H1 (cell line): ENCODE measurements at regions of chr7 and their contacts with region 1.

Region 1: DNA sequence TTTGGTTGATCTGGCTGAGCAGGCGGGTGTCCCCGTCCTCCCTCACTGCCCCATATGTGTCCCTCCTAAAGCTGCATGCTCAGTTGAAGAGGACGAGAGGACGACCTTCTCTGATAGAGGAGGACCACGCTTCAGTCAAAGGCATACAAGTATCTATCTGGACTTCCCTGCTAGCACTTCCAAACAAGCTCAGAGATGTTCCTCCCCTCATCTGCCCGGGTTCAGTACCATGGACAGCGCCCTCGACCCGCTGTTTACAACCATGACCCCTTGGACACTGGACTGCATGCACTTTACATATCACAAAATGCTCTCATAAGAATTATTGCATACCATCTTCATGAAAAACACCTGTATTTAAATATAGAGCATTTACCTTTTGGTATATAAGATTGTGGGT is 26.9 kb upstream of the TRIM56 start:
- DNase-seq: peak in 1 of 2 experiments; percentile 88
- H3K4me3 ChIP-seq: no peak overlapping the region
- H3K27ac ChIP-seq: no peak overlapping the region
- H3K4me1 ChIP-seq: no peaks in the 10 kb centered on the region
- H3K27me3 ChIP-seq: peaks cover 0 to 2% (median 0%) of the 10 kb centered on the region in 4 experiments; a peak in 1 of 7 replicates
- CTCF ChIP-seq: no peak
- EP300 ChIP-seq: no peak
- POLR2A ChIP-seq: no peak
- RAD21 ChIP-seq: 0 out of 4 replicates have a peak, but pooled peaks of 1 of the 2 experiments have one; percentile 3

Region 2: GRCh38 chr7:100896732-100897608 is 161.4 kb before region 1 on chr7:
- CTCF ChIA-PET with region 1: interaction called, 21 read pairs
- POLR2A ChIA-PET with region 1: no interaction called
- DNase-seq: peak in 1 of 2 experiments; percentile 78
- H3K4me3 ChIP-seq: peak overlapping the region; percentile 3 to 58 (median 15); a peak in 4 of 8 replicates
- H3K27ac ChIP-seq: no peak overlapping the region
- H3K4me1 ChIP-seq: peaks cover 0 to 10% (median 6%) of the 10 kb centered on the region in 4 experiments; a peak in 6 of 7 replicates
- H3K27me3 ChIP-seq: peaks cover 15 to 35% (median 19%) of the 10 kb centered on the region in 4 experiments
- CTCF ChIP-seq: peak in 2 of 3 experiments; percentile 72 to 76; a peak in 3 of 4 replicates
- EP300 ChIP-seq: no peak
- POLR2A ChIP-seq: no peak
- RAD21 ChIP-seq: peak; percentile 66 to 81

Region 3: DNA sequence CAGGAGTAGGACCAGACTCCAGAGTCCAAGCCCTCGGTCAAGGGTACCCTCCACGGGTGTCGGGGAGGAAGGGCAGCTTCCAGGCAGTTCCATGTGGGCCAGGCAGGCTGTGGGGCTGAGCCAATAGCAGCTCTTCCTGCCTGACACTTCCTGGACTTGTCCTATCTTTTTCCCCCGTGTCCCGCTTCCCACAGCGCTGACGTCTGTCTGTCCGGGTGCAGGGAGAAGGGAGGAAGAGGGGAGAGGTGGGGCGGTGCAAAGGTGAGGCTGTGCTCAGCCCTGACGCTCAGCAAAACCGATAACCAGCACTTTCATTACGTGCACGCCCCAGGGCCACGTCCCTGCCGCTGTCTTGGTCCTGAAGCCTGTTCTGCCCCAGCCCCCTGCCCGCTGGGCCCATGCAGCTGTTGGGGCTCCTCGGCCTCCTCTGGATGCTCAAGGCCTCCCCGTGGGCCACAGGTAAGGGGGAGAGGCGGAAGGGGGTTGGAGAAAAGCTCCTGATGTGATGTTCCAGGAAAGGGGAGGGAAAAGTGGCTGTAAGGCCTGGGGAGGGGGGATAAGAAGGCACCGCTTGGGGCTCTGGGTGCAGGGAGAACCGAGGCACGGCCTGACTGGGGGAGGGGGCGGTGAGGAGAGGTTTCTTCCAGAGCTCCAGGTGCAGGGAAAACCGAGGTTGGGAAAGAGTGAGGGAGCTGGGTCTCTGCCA is 109.0 kb before region 1 on chr7 and contains the start of gene MUC3A:
- CTCF ChIA-PET with region 1: interaction called, 15 read pairs
- POLR2A ChIA-PET with region 1: interaction called, 5 read pairs
- DNase-seq: peak in 1 of 2 experiments; percentile 66
- H3K4me3 ChIP-seq: peak within 1 kb of the TSS in 1 of 4 experiments; percentile 41; a peak in 3 of 8 replicates
- H3K27ac ChIP-seq: no peak within 1 kb of the TSS
- H3K4me1 ChIP-seq: peaks cover 9 to 33% (median 27%) of the 10 kb centered on the region in 4 experiments
- H3K27me3 ChIP-seq: peaks cover 0 to 3% (median 0%) of the 10 kb centered on the region in 4 experiments; a peak in 3 of 7 replicates
- CTCF ChIP-seq: no peak
- EP300 ChIP-seq: no peak
- POLR2A ChIP-seq: no peak
- RAD21 ChIP-seq: no peak
- total RNA-seq, gene MUC3A: 43.9 and 44.6 TPM in 2 replicates

Region 4: DNA sequence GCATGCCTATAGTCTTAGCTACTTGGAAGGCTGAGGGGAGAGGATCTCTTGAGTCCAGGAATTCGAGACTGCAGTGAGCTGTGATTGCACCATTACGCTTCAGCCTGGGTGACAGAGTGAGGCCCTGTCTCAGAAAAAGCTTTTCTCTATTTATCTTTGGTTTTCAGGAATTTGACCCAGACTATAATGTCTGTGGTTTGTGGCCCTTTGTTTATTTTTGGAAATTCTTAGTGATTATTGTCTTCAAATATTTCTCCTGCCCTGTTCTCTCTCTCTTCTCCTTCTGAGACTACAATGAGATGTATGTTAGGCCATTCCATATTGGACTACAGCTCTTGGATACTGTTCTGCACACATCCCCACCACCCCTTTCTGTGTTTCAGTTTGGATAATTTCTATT is 84.3 kb before region 1 on chr7:
- CTCF ChIA-PET with region 1: interaction called, 21 read pairs
- POLR2A ChIA-PET with region 1: interaction called, 3 read pairs
- DNase-seq: no peak
- H3K4me3 ChIP-seq: no peak overlapping the region
- H3K27ac ChIP-seq: no peak overlapping the region
- H3K4me1 ChIP-seq: no peaks in the 10 kb centered on the region
- H3K27me3 ChIP-seq: no peaks in the 10 kb centered on the region
- CTCF ChIP-seq: no peak
- EP300 ChIP-seq: no peak
- POLR2A ChIP-seq: no peak
- RAD21 ChIP-seq: no peak

Region 5: DNA sequence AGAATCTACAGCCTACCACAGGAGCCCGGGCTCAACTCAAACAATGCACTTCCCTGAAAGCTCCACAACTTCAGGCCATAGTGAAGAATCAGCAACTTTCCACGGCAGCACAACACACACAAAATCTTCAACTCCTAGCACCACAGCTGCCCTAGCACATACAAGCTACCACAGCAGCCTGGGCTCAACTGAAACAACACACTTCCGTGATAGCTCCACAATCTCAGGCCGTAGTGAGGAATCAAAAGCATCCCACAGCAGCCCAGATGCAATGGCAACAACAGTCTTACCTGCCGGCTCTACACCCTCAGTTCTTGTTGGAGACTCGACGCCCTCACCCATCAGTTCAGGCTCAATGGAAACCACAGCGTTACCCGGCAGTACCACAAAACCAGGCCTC is 66.7 kb before region 1 on chr7:
- CTCF ChIA-PET with region 1: interaction called, 12 read pairs
- POLR2A ChIA-PET with region 1: no interaction called
- DNase-seq: no peak
- H3K4me3 ChIP-seq: no peak overlapping the region
- H3K27ac ChIP-seq: no peak overlapping the region
- H3K4me1 ChIP-seq: no peaks in the 10 kb centered on the region
- H3K27me3 ChIP-seq: peaks cover 0 to 3% (median 0%) of the 10 kb centered on the region in 4 experiments; a peak in 1 of 7 replicates
- CTCF ChIP-seq: no peak
- EP300 ChIP-seq: no peak
- POLR2A ChIP-seq: no peak
- RAD21 ChIP-seq: no peak

Region 6: GRCh38 chr7:101018271-101019167 is 39.8 kb before region 1 on chr7:
- CTCF ChIA-PET with region 1: interaction called, 11 read pairs
- POLR2A ChIA-PET with region 1: no interaction called
- DNase-seq: peak in 1 of 2 experiments; percentile 82
- H3K4me3 ChIP-seq: peak overlapping the region in 3 of 4 experiments; percentile 14 to 46 (median 19); a peak in 4 of 8 replicates
- H3K27ac ChIP-seq: peak overlapping the region; percentile 43; the same call in 1 of the 2 replicates
- H3K4me1 ChIP-seq: peaks cover 13 to 27% (median 19%) of the 10 kb centered on the region in 4 experiments
- H3K27me3 ChIP-seq: no peaks in the 10 kb centered on the region; a peak in 1 of 7 replicates
- CTCF ChIP-seq: no peak
- EP300 ChIP-seq: no peak
- POLR2A ChIP-seq: no peak
- RAD21 ChIP-seq: no peak

Region 7: DNA sequence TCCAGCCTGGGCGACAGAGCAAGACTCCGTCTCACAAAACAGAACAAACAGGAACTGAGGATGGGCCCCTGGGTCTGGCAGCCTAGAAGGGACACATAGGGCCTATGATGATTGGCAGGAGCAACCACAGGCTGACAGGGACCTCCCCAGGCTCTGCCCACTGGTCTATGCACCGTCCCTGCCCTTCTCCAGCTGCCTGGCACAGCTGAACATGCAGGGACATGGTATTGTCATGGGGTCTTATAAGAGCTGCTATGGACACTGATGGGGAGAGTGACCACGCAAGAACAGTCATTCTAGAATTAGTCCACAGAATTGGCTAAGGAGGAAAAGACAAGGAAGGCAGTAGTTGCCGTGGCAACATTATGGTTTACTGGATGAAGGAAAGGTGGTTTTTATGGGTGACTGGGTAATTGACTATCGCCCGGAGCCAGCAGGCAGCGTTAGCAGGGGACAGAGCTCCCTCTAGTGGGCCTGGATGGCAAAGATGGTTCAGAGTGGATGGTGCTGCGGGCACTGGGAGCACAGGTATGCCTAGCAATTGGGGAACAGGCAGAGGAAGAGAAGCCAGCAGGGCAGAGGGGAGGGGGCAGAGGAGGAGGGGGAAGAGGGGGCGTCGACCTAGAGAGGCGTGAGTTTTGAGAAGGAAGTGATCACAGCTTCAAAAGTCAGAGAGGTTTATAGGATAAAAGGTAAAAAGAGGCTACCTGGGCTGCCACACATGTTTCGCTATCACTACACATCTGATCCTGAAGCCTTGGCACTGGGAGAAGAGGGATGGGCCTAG is 19.1 kb after region 1 on chr7:
- CTCF ChIA-PET with region 1: interaction called, 15 read pairs
- POLR2A ChIA-PET with region 1: no interaction called
- DNase-seq: peak; percentile 89 to 98
- H3K4me3 ChIP-seq: no peak overlapping the region
- H3K27ac ChIP-seq: no peak overlapping the region
- H3K4me1 ChIP-seq: no peaks in the 10 kb centered on the region
- H3K27me3 ChIP-seq: no peaks in the 10 kb centered on the region
- CTCF ChIP-seq: peak; percentile 94 to 98 (median 96)
- EP300 ChIP-seq: peak in 1 of 2 experiments; percentile 54; a peak in 1 of 3 replicates
- POLR2A ChIP-seq: no peak
- RAD21 ChIP-seq: peak; percentile 97